CD8-positive, alpha-beta T cell (primary cell): ENCODE measurements at regions of chr3 and their contacts with region 1.

Region 1: DNA sequence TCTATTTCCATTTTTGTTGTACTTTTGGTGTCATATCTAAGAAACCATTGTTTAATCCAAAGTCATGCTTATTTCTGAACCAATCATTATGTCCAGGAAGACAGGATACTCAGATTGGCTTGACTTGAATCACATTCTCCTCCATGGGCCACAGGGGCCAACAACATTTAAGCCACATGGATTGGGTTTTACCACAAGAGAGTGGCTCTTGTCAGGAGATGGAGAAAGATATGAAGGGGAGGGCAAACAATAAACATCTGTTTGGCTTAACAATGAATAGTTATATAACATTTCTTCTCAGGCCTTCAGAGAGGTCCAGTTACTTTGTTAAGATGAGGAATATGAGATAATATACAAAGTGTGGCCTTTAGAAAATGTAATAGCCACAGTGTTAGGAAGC is 44.6 kb downstream of the GXYLT2 start:
- DNase-seq: no peak
- ATAC-seq: no peak
- H3K4me3 ChIP-seq: no peak overlapping the region
- H3K4me3 Mint-ChIP-seq: no peak overlapping the region
- H3K27ac ChIP-seq: no peak overlapping the region
- H3K27ac Mint-ChIP-seq: no peak overlapping the region
- H3K4me1 ChIP-seq: no peaks in the 10 kb centered on the region
- H3K4me1 Mint-ChIP-seq: no peaks in the 10 kb centered on the region
- H3K27me3 ChIP-seq: no peaks in the 10 kb centered on the region
- H3K27me3 Mint-ChIP-seq: no peaks in the 10 kb centered on the region
- CTCF ChIP-seq: no peak

Region 2: GRCh38 chr3:70989174-70989573 is 1943.2 kb before region 1 on chr3:
- CTCF ChIA-PET with region 1: no interaction called
- POLR2A ChIA-PET with region 1: no interaction called
- intact Hi-C with region 1: no loop called
- DNase-seq: no peak
- ATAC-seq: no peak
- H3K4me3 ChIP-seq: no peak overlapping the region
- H3K4me3 Mint-ChIP-seq: no peak overlapping the region
- H3K27ac ChIP-seq: no peak overlapping the region
- H3K27ac Mint-ChIP-seq: no peak overlapping the region
- H3K4me1 ChIP-seq: peaks cover 45% of the 10 kb centered on the region
- H3K4me1 Mint-ChIP-seq: peaks cover 65% of the 10 kb centered on the region
- H3K27me3 ChIP-seq: no peaks in the 10 kb centered on the region
- H3K27me3 Mint-ChIP-seq: no peaks in the 10 kb centered on the region
- CTCF ChIP-seq: no peak

Region 3: GRCh38 chr3:72733676-72734075 is 198.7 kb before region 1 on chr3:
- CTCF ChIA-PET with region 1: no interaction called
- POLR2A ChIA-PET with region 1: no interaction called
- intact Hi-C with region 1: loop called in 1 of 2 experiments (anchors 5 kb)
- DNase-seq: no peak
- ATAC-seq: no peak
- H3K4me3 ChIP-seq: no peak overlapping the region
- H3K4me3 Mint-ChIP-seq: no peak overlapping the region
- H3K27ac ChIP-seq: no peak overlapping the region
- H3K27ac Mint-ChIP-seq: no peak overlapping the region
- H3K4me1 ChIP-seq: peaks cover 7% of the 10 kb centered on the region
- H3K4me1 Mint-ChIP-seq: peaks cover 9% of the 10 kb centered on the region
- H3K27me3 ChIP-seq: no peaks in the 10 kb centered on the region
- H3K27me3 Mint-ChIP-seq: no peaks in the 10 kb centered on the region
- CTCF ChIP-seq: no peak

Region 4: DNA sequence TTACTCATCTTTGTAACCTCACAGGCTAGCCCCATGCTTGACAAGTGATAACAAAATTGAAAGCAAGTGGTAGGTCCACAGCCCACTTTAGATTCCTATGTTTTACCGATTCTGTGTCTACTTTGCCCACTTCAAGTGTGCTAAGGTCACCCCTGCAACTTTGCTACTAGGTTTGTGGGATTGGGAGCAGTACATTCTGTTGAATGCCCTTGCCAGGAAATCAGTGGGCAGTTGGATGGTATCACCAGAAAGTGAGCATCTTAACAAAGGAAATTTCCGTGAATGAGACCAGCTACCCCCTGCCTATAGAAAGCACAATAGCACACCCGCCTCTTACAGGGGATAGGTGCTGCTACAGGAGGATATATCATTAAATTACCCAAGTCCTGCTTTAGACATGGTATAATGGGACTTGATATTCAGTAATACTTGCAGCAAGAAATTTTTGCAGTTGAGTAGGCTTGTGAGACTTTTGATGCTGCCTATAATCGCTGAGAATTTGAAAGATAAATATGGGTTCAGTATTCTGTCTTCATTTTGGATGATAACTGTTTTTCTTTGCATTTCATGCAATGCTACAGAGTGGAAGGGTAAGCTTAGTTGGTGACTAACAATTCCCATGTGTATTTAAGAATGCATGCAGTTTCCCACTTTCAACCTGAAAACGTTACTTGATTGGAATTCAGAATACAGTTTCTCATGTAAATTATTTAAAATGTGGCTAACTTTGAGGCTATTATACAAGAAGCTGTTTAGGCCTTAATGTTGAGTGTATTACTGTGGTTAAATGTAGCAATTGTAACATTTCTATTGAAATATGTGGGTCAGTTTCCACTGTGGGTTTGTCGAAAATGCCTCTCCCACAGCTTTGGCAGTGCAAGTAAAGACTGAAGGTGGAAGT is 138.5 kb after region 1 on chr3:
- CTCF ChIA-PET with region 1: no interaction called
- POLR2A ChIA-PET with region 1: no interaction called
- intact Hi-C with region 1: no loop called
- DNase-seq: no peak
- ATAC-seq: no peak
- H3K4me3 ChIP-seq: no peak overlapping the region
- H3K4me3 Mint-ChIP-seq: no peak overlapping the region
- H3K27ac ChIP-seq: no peak overlapping the region
- H3K27ac Mint-ChIP-seq: peak overlapping the region; percentile 39
- H3K4me1 ChIP-seq: no peaks in the 10 kb centered on the region
- H3K4me1 Mint-ChIP-seq: peaks cover 16% of the 10 kb centered on the region
- H3K27me3 ChIP-seq: no peaks in the 10 kb centered on the region
- H3K27me3 Mint-ChIP-seq: no peaks in the 10 kb centered on the region
- CTCF ChIP-seq: no peak